ENCODE measurements at regions of chr2 and their contacts with region 1.

Region 1: DNA sequence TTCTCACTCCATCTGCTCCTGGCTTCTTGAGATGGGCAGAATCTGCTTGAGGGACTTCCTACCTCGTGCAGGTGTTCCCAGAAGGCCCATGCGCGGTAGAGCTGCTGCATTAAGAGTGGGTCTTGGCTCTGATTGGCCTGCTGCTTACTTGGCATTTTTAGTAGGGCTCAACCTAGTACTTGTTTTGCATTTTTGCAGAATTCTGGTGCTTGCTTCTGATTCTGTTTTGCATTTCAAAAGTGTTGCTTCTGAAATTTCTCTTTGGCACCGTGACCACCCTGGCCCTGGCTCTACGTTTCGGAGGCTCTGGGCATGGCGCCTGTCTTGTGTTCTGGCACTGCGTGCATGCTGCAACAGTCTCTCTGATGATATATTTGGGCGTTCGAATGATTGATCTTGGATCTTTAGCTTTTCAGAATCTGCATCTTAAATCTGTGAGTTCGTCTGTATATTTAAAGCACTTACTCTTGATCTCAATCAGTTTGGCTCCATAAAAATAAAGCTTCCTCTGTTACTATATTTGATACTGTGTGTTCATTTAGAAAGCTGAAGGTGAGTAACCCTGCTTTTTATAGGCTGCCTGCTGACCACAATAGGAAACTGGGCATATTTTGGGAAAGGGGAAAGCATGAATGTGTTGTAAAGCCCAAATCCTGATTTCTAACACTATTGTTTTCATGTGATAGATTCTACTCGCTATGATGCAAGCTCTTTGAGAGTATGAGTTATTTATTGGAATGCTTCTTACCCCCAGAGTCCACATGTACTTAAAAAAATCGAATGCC is 22.2 kb downstream of the EFR3B start:
- DNase-seq: no peak

Region 2: DNA sequence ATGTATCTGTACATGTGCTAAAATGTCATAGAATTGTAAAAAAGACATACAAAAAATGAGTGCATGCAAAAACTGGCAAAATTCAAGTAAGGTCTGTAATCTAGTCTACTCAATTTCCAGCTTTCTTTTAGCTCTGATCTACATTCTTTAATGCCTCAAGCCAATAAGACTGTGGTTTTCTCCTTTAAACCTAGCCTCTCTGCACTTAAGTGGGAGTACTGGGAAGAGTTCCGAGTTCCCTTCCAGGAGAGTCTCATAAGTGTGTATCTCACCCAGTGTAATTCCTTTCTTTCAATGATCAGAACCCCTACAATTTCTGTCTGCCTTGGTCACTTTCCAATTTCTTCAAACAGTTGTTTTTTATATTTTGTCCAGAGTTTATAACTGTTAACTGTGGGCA is 421.0 kb before region 1 on chr2:
- intact Hi-C with region 1: no loop called
- DNase-seq: no peak

Region 3: GRCh38 chr2:24957221-24957620 is 106.8 kb before region 1 on chr2:
- intact Hi-C with region 1: no loop called
- DNase-seq: no peak

Region 4: GRCh38 chr2:24984912-24985311 is 79.2 kb before region 1 on chr2:
- intact Hi-C with region 1: loop called (anchors 5 kb)
- DNase-seq: peak; percentile 77

Region 5: DNA sequence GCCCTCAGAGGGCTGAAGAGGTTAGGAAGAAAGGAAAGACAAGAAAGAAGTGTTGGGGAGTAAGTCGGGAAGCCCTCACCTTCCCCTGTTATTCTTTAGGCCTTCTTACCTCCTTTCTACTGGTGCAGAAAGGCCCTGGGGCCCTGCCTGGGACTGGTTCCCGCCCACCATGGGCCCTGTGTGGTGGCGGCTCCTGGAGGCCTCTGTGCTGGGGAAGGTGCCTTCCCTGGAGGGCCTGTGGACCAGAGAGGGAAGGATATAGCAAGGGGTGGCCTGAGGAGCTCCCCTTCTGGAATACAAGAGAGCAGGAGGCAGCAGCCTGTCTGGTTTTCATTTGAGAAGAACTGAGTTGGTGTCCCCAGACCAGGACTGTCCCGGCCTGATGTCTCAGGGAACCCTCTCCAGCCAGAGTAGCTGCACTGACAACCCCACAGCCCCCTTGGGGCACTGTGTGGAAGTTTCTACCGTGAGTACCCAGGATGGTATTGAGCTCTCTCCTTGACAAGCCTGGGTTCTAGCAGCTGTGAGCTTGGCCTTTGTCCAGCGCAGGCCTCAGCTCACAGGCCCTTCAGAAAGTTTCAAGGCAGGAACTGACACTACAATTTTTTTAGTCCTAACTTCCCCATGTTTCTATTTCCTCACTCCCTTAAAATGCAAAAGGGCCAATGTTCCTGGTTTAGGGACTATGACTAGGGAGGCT is 24.9 kb after region 1 on chr2:
- intact Hi-C with region 1: no loop called
- DNase-seq: no peak

Measured in cardiac septum (tissue), 1 donor.